Heart right ventricle (tissue), 16 donors: ENCODE measurements at regions of chr15 and their contacts with region 1.

Region 1: DNA sequence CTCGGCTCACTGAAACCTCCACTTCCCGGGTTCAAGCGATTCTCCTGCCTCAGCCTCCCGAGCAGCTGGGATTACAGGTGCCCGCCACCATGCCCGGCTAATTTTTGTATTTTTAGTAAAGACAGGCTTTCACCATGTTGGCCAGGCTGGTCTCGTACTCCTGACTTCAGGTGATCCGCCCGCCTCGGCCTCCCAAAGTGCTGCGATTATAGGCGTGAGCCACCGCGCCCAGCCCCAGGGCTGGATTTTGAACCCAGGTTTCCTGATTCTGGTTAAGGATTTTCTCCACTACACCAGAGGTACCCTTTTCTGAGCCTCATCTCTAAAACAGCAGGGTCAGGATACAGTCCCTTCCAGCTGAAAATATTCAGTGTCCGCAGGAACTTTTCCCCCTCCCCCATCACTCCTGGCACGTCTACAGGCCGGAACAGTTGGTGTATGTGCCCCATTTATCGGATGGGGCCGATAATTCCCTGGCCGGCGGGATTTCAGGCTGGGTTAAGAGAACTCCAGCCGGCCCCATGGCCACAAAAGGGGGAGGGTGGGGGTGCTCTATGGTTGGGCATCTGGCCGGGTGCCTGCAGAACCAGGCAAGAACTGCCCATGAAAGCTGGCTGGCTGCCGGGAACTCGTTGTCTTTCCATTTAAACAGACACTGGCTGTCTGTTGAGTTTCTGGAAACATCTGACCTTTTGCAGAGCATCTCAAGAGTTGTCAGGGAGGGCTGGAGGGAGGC is 26.8 kb upstream of the SEMA4B start:
- DNase-seq: peak; percentile 88 to 89
- ATAC-seq: peak; percentile 68 to 93 (median 90)
- H3K4me3 ChIP-seq: peak overlapping the region in 2 of 10 donors; percentile 11 to 22
- H3K27ac ChIP-seq: peak overlapping the region; percentile 83 to 96 (median 91)
- H3K4me1 ChIP-seq: peaks cover 0 to 29% (median 14%) of the 10 kb centered on the region in 9 donors
- H3K27me3 ChIP-seq: peaks cover 0 to 2% (median 0%) of the 10 kb centered on the region in 7 donors
- CTCF ChIP-seq: no peak

Region 2: GRCh38 chr15:89863918-89864317 is 310.4 kb before region 1 on chr15:
- intact Hi-C with region 1: no loop called
- DNase-seq: no peak
- ATAC-seq: no peak
- H3K4me3 ChIP-seq: no peak overlapping the region
- H3K27ac ChIP-seq: no peak overlapping the region
- H3K4me1 ChIP-seq: peaks cover 0 to 8% (median 0%) of the 10 kb centered on the region in 9 donors
- H3K27me3 ChIP-seq: no peaks in the 10 kb centered on the region
- CTCF ChIP-seq: no peak

Region 3: DNA sequence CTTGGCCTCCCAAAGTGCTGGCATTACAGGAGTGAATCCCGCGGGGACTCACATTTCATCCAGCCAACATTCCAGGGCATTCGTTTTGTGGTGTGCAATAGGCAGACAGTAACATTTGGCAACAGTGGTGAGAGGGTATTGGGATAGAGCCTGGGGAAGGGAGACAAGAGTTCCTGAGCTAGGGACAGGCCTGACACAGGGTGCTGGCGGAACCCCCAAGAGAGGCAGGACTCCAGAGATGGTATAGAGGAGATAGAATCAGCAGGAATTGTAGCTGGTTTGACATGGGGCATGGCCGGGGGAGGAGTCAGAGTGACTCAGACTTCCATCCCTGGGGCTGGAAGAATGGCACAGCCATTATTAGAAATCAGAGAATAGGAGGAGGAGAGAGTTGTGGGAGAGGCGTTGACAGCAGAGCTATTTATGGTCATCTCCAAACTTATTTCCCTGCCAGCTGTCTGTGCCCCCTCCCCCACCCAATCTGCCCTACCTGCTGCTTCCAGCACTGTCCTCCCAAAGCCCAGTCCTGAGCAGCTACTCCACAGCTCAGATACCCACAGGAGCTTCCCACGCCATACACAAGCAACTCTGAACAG is 67.7 kb before region 1 on chr15:
- intact Hi-C with region 1: no loop called
- DNase-seq: peak; percentile 58 to 80
- ATAC-seq: peak; percentile 31 to 86 (median 74)
- H3K4me3 ChIP-seq: no peak overlapping the region
- H3K27ac ChIP-seq: peak overlapping the region; percentile 87 to 100 (median 99)
- H3K4me1 ChIP-seq: peaks cover 0 to 37% (median 13%) of the 10 kb centered on the region in 9 donors
- H3K27me3 ChIP-seq: no peaks in the 10 kb centered on the region
- CTCF ChIP-seq: no peak

Region 4: DNA sequence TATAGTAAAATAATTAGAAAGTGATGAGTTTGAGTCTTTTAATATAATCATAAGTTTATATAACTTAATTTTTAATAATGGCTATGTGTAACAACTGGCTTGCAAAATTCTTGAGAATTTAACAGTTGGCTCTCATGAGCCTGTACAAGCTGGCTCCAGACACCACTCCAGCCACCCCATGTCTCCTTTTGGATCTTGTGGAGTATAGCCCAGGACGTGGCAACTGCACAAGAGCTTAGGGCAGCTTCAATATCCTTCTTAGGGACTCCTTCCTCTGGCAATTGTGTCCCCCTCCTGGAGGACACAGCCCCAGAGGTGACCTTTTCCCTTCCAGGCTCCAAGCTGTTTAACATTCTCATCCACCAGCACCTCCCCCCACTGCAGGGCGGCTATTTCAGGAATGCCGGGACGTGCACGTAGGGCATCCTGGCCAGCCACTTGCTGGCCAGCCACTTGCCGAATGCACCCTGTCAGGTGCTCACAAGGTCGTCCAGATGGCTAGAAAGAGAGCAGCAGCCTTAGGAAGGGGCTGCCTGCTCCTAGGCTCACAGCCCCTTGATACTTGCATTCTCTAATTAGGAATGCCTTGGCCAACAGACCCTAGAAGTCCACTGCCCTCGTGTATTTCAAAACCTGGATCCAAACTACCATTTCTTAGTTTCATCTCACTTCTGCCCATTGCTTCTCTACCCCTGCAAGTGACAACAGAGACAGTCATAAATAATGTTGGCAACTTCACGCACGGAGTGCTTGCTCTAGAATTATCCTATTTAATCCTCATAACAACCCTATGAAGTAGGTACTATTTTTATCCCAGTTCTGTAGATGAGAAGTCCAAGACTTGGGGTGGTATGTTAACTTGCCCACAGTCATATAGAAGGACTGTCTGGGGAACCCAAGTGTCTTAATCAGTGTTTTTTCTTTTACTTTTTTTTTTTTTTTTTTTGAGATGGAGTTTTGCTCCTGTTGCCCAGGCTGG is 47.6 kb before region 1 on chr15:
- intact Hi-C with region 1: no loop called
- DNase-seq: peak; percentile 67 to 71
- ATAC-seq: peak; percentile 70 to 96 (median 90)
- H3K4me3 ChIP-seq: no peak overlapping the region
- H3K27ac ChIP-seq: peak overlapping the region; percentile 17 to 89 (median 80)
- H3K4me1 ChIP-seq: peaks cover 0 to 19% (median 4%) of the 10 kb centered on the region in 9 donors
- H3K27me3 ChIP-seq: peaks cover 0 to 3% (median 0%) of the 10 kb centered on the region in 7 donors
- CTCF ChIP-seq: no peak

Region 5: GRCh38 chr15:90184786-90185569 is 10.7 kb after region 1 on chr15:
- intact Hi-C with region 1: loop called in 1 of 10 experiments (anchors 1 kb)
- DNase-seq: peak; percentile 61 to 83
- ATAC-seq: peak; percentile 83 to 93 (median 89)
- H3K4me3 ChIP-seq: peak overlapping the region; percentile 54 to 88 (median 70)
- H3K27ac ChIP-seq: peak overlapping the region; percentile 90 to 95 (median 92)
- H3K4me1 ChIP-seq: peaks cover 0 to 65% (median 15%) of the 10 kb centered on the region in 9 donors
- H3K27me3 ChIP-seq: peaks cover 0 to 4% (median 0%) of the 10 kb centered on the region in 7 donors
- CTCF ChIP-seq: peak in 1 of 9 donors; percentile 11